ENCODE measurements at regions of chr17 and their contacts with region 1.

Region 1: DNA sequence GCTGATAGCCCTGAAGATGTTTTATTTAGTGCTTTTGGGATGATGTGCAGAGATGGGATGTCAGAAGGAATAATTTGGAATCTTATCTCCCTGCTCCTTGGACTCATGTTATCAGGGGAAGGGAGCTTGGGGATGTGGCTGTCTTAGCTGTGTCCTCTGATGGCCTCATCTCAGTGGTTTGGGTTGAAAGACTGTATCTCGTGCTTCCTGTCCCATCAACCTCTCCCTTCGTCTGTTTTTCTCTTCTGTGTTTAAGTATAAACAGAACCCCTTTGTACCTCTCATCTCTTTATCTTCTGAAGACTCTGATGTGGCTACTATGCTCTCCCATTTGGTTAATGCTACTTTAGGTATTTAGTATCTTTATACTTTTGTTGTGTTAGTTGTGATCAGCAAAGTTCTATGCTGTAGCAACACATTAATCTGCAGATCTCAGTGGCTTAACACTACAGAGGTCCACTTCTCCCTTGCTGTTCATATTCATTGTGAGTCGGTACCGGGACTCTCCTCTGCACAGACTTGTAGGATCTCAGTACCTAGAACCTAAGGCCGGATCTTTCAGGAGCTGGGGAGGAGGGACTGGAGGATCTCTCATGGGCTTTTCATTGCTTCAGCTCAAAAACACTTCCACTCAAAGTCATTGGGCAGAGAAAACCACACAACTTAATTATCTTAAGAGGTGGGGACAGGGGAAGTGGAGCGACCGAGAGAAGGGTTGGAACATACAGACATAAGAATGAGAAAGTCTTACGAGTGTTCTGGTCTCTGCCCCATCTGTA is 28.8 kb downstream of the PRKCA start:
- DNase-seq: peak in 9 of 14 experiments; percentile 9 to 71 (median 20)
- ATAC-seq: peak; percentile 80
- H3K4me3 ChIP-seq: peak overlapping the region; percentile 33
- H3K4me3 Mint-ChIP-seq: peak overlapping the region; percentile 86
- H3K27ac ChIP-seq: peak overlapping the region; percentile 20 to 49
- H3K27ac Mint-ChIP-seq: peak overlapping the region; percentile 97
- H3K4me1 ChIP-seq: peaks cover 61% of the 10 kb centered on the region
- H3K4me1 Mint-ChIP-seq: peaks cover 89% of the 10 kb centered on the region
- H3K27me3 ChIP-seq: no peaks in the 10 kb centered on the region
- H3K27me3 Mint-ChIP-seq: no peaks in the 10 kb centered on the region
- CTCF ChIP-seq: no peak

Region 2: DNA sequence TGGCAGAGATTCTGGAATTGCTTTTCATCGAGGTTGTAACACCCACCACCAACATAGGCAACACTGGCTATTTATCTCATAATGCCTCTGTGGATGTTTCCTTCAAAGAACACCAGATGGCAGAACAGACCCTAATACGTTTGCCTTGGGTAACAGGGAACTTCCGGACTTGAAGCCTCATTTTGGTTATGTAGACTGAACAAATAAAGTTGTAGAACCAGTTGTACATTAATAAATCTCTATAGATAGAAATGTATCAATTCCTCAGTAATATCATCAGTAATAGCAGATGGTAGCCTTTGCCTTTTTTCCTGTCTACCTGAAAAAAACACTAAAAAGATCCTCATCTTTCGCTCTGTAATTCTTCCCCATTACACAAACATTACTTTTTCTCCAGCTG is 76.1 kb before region 1 on chr17:
- CTCF ChIA-PET with region 1: no interaction called
- POLR2A ChIA-PET with region 1: no interaction called
- intact Hi-C with region 1: loop called in 1 of 2 experiments (anchors 5 kb)
- DNase-seq: peak in 8 of 14 experiments; percentile 21 to 87 (median 42)
- ATAC-seq: peak; percentile 95
- H3K4me3 ChIP-seq: no peak overlapping the region
- H3K4me3 Mint-ChIP-seq: peak overlapping the region; percentile 59
- H3K27ac ChIP-seq: peak overlapping the region in 1 of 2 donors; percentile 15
- H3K27ac Mint-ChIP-seq: peak overlapping the region; percentile 82
- H3K4me1 ChIP-seq: peaks cover 8% of the 10 kb centered on the region
- H3K4me1 Mint-ChIP-seq: peaks cover 23% of the 10 kb centered on the region
- H3K27me3 ChIP-seq: no peaks in the 10 kb centered on the region
- H3K27me3 Mint-ChIP-seq: no peaks in the 10 kb centered on the region
- CTCF ChIP-seq: peak; percentile 82

Region 3: GRCh38 chr17:66296289-66296776 is 34.9 kb before region 1 on chr17:
- CTCF ChIA-PET with region 1: no interaction called
- POLR2A ChIA-PET with region 1: interaction called, 44 read pairs
- intact Hi-C with region 1: loop called in 1 of 2 experiments (anchors 5 kb)
- DNase-seq: no peak
- ATAC-seq: no peak
- H3K4me3 ChIP-seq: no peak overlapping the region
- H3K4me3 Mint-ChIP-seq: no peak overlapping the region
- H3K27ac ChIP-seq: no peak overlapping the region
- H3K27ac Mint-ChIP-seq: peak overlapping the region; percentile 16
- H3K4me1 ChIP-seq: peaks cover 8% of the 10 kb centered on the region
- H3K4me1 Mint-ChIP-seq: peaks cover 46% of the 10 kb centered on the region
- H3K27me3 ChIP-seq: no peaks in the 10 kb centered on the region
- H3K27me3 Mint-ChIP-seq: no peaks in the 10 kb centered on the region
- CTCF ChIP-seq: no peak

Region 4: DNA sequence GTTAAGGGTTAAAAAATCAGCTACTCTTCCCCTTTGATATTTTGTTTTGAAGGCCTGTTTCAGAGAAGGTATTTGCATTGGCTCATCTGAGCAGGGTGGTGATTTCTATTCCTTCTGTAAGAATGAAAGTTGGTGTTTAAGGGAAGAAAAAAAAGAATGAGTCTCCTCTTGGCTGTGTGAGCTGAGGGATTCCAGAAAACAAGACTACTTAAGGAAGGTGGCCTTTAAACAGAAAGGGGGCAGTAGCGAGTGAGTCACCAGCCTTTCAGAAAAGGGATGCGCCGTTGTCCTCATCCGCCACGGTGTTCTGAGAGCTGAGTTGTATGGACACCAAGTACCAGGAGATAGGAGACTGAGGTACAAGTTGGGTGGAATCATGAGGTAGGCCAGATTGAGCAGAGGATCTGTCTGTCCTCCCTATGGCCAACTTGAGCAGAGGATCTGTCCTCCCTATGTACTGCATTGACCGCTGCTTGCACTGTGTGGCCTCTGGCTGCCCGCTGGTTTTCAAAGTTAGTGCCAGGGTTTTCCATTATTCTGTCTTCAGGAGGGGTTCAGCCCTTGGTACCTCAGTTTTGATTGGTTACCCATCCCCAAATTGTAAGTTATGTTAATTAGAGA is 20.6 kb before region 1 on chr17:
- CTCF ChIA-PET with region 1: interaction called, 5 read pairs
- POLR2A ChIA-PET with region 1: interaction called, 27 read pairs
- intact Hi-C with region 1: loop called (anchors 2 kb)
- DNase-seq: peak in 2 of 14 experiments; percentile 38 to 48
- ATAC-seq: peak; percentile 18
- H3K4me3 ChIP-seq: no peak overlapping the region
- H3K4me3 Mint-ChIP-seq: peak overlapping the region; percentile 32
- H3K27ac ChIP-seq: no peak overlapping the region
- H3K27ac Mint-ChIP-seq: peak overlapping the region; percentile 85
- H3K4me1 ChIP-seq: peaks cover 9% of the 10 kb centered on the region
- H3K4me1 Mint-ChIP-seq: peaks cover 95% of the 10 kb centered on the region
- H3K27me3 ChIP-seq: no peaks in the 10 kb centered on the region
- H3K27me3 Mint-ChIP-seq: no peaks in the 10 kb centered on the region
- CTCF ChIP-seq: no peak

Region 5: GRCh38 chr17:66343531-66344078 is 12.4 kb after region 1 on chr17:
- CTCF ChIA-PET with region 1: interaction called, 3 read pairs
- POLR2A ChIA-PET with region 1: interaction called, 12 read pairs
- intact Hi-C with region 1: no loop called
- DNase-seq: no peak
- ATAC-seq: no peak
- H3K4me3 ChIP-seq: no peak overlapping the region
- H3K4me3 Mint-ChIP-seq: no peak overlapping the region
- H3K27ac ChIP-seq: no peak overlapping the region
- H3K27ac Mint-ChIP-seq: no peak overlapping the region
- H3K4me1 ChIP-seq: peaks cover 12% of the 10 kb centered on the region
- H3K4me1 Mint-ChIP-seq: peaks cover 73% of the 10 kb centered on the region
- H3K27me3 ChIP-seq: no peaks in the 10 kb centered on the region
- H3K27me3 Mint-ChIP-seq: no peaks in the 10 kb centered on the region
- CTCF ChIP-seq: no peak

Region 6: GRCh38 chr17:66397486-66397885 is 66.3 kb after region 1 on chr17:
- CTCF ChIA-PET with region 1: no interaction called
- POLR2A ChIA-PET with region 1: interaction called, 18 read pairs
- intact Hi-C with region 1: loop called in 1 of 2 experiments (anchors 5 kb)
- DNase-seq: no peak
- ATAC-seq: peak; percentile 48
- H3K4me3 ChIP-seq: no peak overlapping the region
- H3K4me3 Mint-ChIP-seq: peak overlapping the region; percentile 64
- H3K27ac ChIP-seq: peak overlapping the region; percentile 12 to 40
- H3K27ac Mint-ChIP-seq: peak overlapping the region; percentile 89
- H3K4me1 ChIP-seq: peaks cover 43% of the 10 kb centered on the region
- H3K4me1 Mint-ChIP-seq: peaks cover 83% of the 10 kb centered on the region
- H3K27me3 ChIP-seq: no peaks in the 10 kb centered on the region
- H3K27me3 Mint-ChIP-seq: no peaks in the 10 kb centered on the region
- CTCF ChIP-seq: no peak

Region 7: GRCh38 chr17:66420961-66421371 is 89.7 kb after region 1 on chr17:
- CTCF ChIA-PET with region 1: interaction called, 3 read pairs
- POLR2A ChIA-PET with region 1: no interaction called
- intact Hi-C with region 1: loop called in 1 of 2 experiments (anchors 5 kb)
- DNase-seq: no peak
- ATAC-seq: no peak
- H3K4me3 ChIP-seq: no peak overlapping the region
- H3K4me3 Mint-ChIP-seq: no peak overlapping the region
- H3K27ac ChIP-seq: no peak overlapping the region
- H3K27ac Mint-ChIP-seq: peak overlapping the region; percentile 25
- H3K4me1 ChIP-seq: peaks cover 15% of the 10 kb centered on the region
- H3K4me1 Mint-ChIP-seq: peaks cover 64% of the 10 kb centered on the region
- H3K27me3 ChIP-seq: no peaks in the 10 kb centered on the region
- H3K27me3 Mint-ChIP-seq: no peaks in the 10 kb centered on the region
- CTCF ChIP-seq: no peak